HepG2 (cell line): ENCODE measurements at regions of chr20 and their contacts with region 1.

Region 1: DNA sequence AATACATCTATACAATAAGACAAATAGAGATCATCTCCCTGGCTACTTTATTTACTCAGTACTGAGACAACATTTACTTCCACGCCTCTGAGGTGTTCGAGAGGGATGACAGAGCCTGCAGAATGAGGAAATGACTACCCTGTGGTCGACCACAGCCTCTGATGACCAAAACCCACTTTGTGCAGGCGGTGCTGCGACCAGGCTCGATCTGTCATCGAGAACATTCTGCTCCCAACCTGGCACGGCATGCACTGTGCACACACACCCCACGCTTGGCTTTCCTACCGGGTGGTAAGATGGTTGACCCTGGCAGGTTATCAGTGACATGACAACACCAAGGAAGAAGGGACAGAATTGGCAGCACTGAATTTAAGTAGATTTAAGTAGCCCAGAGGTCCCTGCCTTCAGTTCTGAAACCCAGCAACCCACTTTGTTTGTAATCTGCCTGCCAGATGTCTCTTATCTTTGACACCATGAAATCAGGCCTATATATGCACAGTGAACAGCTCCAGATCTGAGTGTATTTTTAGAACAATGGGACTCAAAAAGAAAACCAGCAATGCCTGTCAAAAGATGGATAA is 42.6 kb downstream of the TTI1 start:
- DNase-seq: peak; percentile 40
- ATAC-seq: no peak
- H3K4me3 ChIP-seq: no peak overlapping the region
- H3K27ac ChIP-seq: no peak overlapping the region
- H3K4me1 ChIP-seq: peaks cover 48% of the 10 kb centered on the region
- H3K27me3 ChIP-seq: no peaks in the 10 kb centered on the region
- CTCF ChIP-seq: no peak
- EP300 ChIP-seq: 0 out of 4 replicates have a peak, but pooled peaks of 1 of the 2 experiments have one; percentile 21
- POLR2A ChIP-seq: no peak
- RAD21 ChIP-seq: no peak

Region 2: DNA sequence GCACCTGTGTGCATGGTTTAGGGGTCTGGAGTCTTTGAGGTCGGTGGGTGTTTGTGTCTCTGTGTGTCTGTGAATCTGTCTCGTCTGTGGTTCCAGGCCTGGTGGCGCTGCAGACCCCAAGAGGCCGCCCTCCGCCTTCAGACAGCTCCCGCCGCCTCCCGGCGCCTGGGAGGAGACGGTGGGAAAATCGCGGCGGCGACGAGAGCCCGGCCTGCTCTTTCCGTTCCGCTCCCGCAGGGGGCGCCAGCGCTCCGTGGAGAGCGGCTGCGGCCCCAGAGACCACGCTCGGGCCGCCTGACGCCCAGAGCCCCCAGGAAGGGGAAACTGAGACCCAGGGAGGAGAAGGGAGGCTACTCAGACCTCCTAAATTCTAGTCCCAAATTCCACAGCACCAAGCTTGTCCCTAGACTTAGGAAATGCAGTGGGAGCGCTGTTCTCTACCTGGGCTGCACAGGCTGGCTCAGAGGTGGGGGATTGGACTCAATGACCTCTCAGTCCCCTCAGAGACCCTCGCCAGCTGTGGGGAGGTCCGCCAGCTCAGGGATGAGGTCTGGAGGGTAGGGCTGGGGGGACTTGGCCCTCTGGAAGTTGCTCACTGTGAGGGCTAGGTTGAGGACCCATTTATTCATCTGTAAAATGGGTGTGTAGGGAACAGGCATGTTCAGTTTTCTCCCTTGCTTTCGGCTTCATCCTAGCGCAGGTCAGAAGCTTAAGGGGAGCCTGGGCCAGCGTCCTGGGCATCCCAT is 426.1 kb before region 1 on chr20:
- CTCF ChIA-PET with region 1: interaction called, 13 read pairs
- POLR2A ChIA-PET with region 1: no interaction called
- in situ Hi-C with region 1: loop called (anchors 5 kb)
- intact Hi-C with region 1: loop called (anchors 1 kb)
- DNase-seq: peak; percentile 30
- ATAC-seq: peak; percentile 87
- H3K4me3 ChIP-seq: peak overlapping the region in 2 of 3 experiments; percentile 12 to 50; a peak in 2 of 6 replicates
- H3K27ac ChIP-seq: no peak overlapping the region
- H3K4me1 ChIP-seq: peaks cover 33% of the 10 kb centered on the region
- H3K27me3 ChIP-seq: peaks cover 6 to 65% of the 10 kb centered on the region in 2 experiments; a peak in 4 of 5 replicates
- CTCF ChIP-seq: peak; percentile 99
- EP300 ChIP-seq: no peak
- POLR2A ChIP-seq: no peak
- RAD21 ChIP-seq: peak; percentile 99

Region 3: DNA sequence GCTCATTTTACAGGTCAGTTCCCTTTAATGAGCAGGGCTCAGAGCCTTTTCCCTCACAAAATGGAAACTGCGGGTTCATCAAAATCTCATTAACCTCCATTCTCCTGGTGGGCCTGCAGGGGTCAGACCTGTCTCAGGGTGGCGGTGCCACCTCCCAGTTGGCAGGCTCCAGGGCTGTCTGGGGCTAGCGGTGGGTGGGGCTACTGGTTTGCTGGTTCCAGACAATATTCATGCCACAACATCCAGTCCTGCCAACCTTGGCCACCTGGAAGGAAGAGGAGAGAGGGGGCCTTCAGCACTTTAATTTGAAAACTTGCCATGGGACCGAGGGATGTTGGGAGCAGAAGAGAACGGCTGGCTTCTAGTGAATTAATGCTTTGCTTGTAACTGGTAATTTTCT is 338.7 kb before region 1 on chr20:
- CTCF ChIA-PET with region 1: interaction called, 11 read pairs
- POLR2A ChIA-PET with region 1: no interaction called
- in situ Hi-C with region 1: loop called (anchors 5 kb)
- intact Hi-C with region 1: no loop called
- DNase-seq: peak; percentile 51
- ATAC-seq: peak; percentile 95
- H3K4me3 ChIP-seq: no peak overlapping the region
- H3K27ac ChIP-seq: no peak overlapping the region
- H3K4me1 ChIP-seq: no peaks in the 10 kb centered on the region
- H3K27me3 ChIP-seq: peaks cover 0 to 12% of the 10 kb centered on the region in 2 experiments; a peak in 2 of 5 replicates
- CTCF ChIP-seq: peak; percentile 96
- EP300 ChIP-seq: no peak
- POLR2A ChIP-seq: no peak
- RAD21 ChIP-seq: peak; percentile 97

Region 4: GRCh38 chr20:37657924-37658804 is 332.5 kb before region 1 on chr20:
- CTCF ChIA-PET with region 1: no interaction called
- POLR2A ChIA-PET with region 1: no interaction called
- in situ Hi-C with region 1: loop called (anchors 5 kb)
- intact Hi-C with region 1: no loop called
- DNase-seq: no peak
- ATAC-seq: no peak; the same call in 2 of the 3 replicates
- H3K4me3 ChIP-seq: no peak overlapping the region
- H3K27ac ChIP-seq: no peak overlapping the region
- H3K4me1 ChIP-seq: no peaks in the 10 kb centered on the region
- H3K27me3 ChIP-seq: no peaks in the 10 kb centered on the region
- CTCF ChIP-seq: no peak
- EP300 ChIP-seq: no peak
- POLR2A ChIP-seq: no peak
- RAD21 ChIP-seq: no peak

Region 5: DNA sequence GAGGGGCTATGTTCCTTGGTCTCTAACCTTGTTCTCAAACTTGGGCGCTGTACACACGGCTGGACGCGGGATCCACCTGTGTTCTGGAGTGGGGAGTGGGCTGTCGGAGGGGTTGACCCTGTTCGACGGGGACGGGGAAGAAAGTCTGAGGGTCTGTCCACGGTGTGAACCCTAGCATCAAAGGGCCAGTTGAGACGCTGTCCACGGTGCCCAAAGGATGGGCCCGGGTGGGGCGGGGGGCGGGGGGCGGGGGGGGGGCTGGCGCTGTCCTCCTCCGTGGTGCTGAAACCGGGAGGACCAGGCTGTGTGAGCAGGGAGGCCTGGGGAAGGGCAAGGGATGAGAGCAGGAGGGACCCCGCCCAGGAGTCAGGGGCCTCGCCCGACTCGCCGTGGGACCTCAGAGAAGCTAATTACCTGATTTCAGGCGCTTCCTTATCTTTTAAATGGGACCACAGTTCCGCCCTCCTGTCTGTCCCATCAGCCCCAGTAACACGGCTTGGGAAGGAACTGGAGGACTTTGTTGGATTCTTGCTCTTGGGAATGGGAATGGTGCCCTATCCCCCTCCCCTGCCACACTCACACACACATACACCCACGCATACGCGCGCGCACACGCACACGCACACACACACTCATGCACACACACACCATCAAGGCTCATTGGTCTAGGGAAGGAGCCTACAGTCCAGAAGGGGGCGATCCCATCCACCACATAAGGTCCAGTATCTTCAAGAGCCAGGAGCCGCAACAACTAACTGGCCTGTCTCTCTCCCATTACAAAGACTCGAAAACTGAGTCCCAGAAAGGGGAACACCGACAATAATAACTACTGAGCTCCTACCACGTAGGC is 88.8 kb before region 1 on chr20:
- CTCF ChIA-PET with region 1: interaction called, 5 read pairs
- POLR2A ChIA-PET with region 1: no interaction called
- in situ Hi-C with region 1: loop called (anchors 5 kb)
- intact Hi-C with region 1: loop called (anchors 1 kb)
- DNase-seq: peak; percentile 61
- ATAC-seq: peak; percentile 49
- H3K4me3 ChIP-seq: peak overlapping the region in 1 of 3 experiments; percentile 64; a peak in 1 of 6 replicates
- H3K27ac ChIP-seq: no peak overlapping the region
- H3K4me1 ChIP-seq: peaks cover 16% of the 10 kb centered on the region; the same call in 1 of the 2 replicates
- H3K27me3 ChIP-seq: peaks cover 13 to 54% of the 10 kb centered on the region in 2 experiments; a peak in 4 of 5 replicates
- CTCF ChIP-seq: peak; percentile 85
- EP300 ChIP-seq: no peak
- POLR2A ChIP-seq: no peak
- RAD21 ChIP-seq: peak; percentile 57; the same call in 1 of the 2 replicates

Region 6: DNA sequence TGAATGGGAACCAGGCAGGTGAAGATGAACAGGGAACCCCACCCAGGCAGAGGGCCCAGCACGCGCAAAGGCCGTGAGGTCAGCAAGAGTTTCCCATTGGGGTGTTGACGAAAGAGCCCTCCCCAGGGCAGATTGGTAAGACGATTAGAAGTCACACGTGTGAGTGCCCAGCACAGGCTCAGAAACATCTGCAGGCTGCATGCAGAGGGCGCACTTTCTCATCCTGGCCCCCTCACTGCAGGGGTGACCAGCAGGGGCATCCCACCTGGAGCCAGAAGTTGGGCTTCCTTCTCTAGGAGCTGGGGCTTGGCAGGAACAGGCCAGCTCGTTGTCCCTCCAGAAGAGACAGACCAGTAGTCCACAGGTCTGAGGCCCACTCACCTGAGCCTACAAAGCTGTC is 49.3 kb before region 1 on chr20:
- CTCF ChIA-PET with region 1: interaction called, 19 read pairs
- POLR2A ChIA-PET with region 1: interaction called, 4 read pairs
- in situ Hi-C with region 1: no loop called
- intact Hi-C with region 1: loop called (anchors 1 kb)
- DNase-seq: peak; percentile 69
- ATAC-seq: peak; percentile 87
- H3K4me3 ChIP-seq: no peak overlapping the region
- H3K27ac ChIP-seq: no peak overlapping the region
- H3K4me1 ChIP-seq: peaks cover 16% of the 10 kb centered on the region
- H3K27me3 ChIP-seq: peaks cover 8 to 9% of the 10 kb centered on the region in 2 experiments; a peak in 3 of 5 replicates
- CTCF ChIP-seq: peak; percentile 81
- EP300 ChIP-seq: no peak
- POLR2A ChIP-seq: no peak
- RAD21 ChIP-seq: peak; percentile 84